Mammary epithelial cell (primary cell): ENCODE measurements at regions of chr15 and their contacts with region 1.

Region 1: GRCh38 chr15:99282121-99282520 is 30.8 kb downstream of the LRRC28 start:
- DNase-seq: no peak
- H3K4me3 ChIP-seq: no peak overlapping the region
- H3K27ac ChIP-seq: no peak overlapping the region
- H3K4me1 ChIP-seq: peaks cover 8% of the 10 kb centered on the region
- H3K27me3 ChIP-seq: no peaks in the 10 kb centered on the region
- CTCF ChIP-seq: no peak

Region 2: GRCh38 chr15:98904544-98904943 is 377.6 kb before region 1 on chr15:
- CTCF ChIA-PET with region 1: no interaction called
- dilution Hi-C with region 1: no loop called
- in situ Hi-C with region 1: no loop called
- intact Hi-C with region 1: no loop called
- DNase-seq: peak; percentile 52
- H3K4me3 ChIP-seq: no peak overlapping the region
- H3K27ac ChIP-seq: peak overlapping the region; percentile 94
- H3K4me1 ChIP-seq: peaks cover 69% of the 10 kb centered on the region
- H3K27me3 ChIP-seq: no peaks in the 10 kb centered on the region
- CTCF ChIP-seq: peak; percentile 67 to 84

Region 3: GRCh38 chr15:99324082-99324620 is 42.0 kb after region 1 on chr15:
- CTCF ChIA-PET with region 1: no interaction called
- dilution Hi-C with region 1: no loop called
- in situ Hi-C with region 1: no loop called
- intact Hi-C with region 1: loop called (anchors 5 kb)
- DNase-seq: peak; percentile 85
- H3K4me3 ChIP-seq: peak overlapping the region; percentile 33 to 59 (median 37)
- H3K27ac ChIP-seq: peak overlapping the region; percentile 99
- H3K4me1 ChIP-seq: peaks cover 67% of the 10 kb centered on the region
- H3K27me3 ChIP-seq: no peaks in the 10 kb centered on the region
- CTCF ChIP-seq: no peak

Region 4: DNA sequence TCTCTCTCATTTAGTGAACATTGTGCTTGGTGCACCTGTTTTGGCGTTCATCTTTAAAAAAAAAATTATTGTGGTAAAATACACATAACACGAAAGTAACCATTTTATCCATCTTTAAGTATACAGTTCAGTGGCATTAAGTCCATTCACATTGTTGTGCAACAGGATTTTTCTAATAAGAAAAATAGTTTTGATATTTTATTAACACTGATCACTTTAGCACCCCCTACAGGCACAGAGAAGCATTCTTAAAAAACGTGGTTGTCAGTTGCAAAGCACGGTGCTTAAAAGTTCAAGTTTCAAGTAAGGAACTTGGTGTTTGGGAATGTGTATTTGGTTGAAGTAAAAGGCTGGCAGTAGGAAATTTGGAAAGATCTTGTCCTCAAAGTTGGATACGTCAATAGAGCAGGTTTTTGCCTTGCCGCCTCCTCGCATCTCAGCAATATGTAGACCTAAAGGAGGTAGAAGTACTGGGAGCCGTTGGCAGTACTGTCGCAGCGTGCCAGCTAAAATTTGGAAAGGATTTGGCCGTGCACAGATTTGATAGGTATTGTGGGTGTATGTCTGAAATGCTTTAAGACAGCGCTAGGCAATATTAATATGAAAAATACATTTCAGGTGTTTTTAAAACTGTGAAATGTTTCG is 79.5 kb after region 1 on chr15:
- CTCF ChIA-PET with region 1: no interaction called
- dilution Hi-C with region 1: no loop called
- in situ Hi-C with region 1: loop called in 1 of 2 experiments (anchors 10 kb)
- intact Hi-C with region 1: loop called (anchors 1 kb)
- DNase-seq: peak; percentile 14
- H3K4me3 ChIP-seq: no peak overlapping the region
- H3K27ac ChIP-seq: no peak overlapping the region
- H3K4me1 ChIP-seq: no peaks in the 10 kb centered on the region
- H3K27me3 ChIP-seq: no peaks in the 10 kb centered on the region
- CTCF ChIP-seq: peak; percentile 59 to 66

Region 5: DNA sequence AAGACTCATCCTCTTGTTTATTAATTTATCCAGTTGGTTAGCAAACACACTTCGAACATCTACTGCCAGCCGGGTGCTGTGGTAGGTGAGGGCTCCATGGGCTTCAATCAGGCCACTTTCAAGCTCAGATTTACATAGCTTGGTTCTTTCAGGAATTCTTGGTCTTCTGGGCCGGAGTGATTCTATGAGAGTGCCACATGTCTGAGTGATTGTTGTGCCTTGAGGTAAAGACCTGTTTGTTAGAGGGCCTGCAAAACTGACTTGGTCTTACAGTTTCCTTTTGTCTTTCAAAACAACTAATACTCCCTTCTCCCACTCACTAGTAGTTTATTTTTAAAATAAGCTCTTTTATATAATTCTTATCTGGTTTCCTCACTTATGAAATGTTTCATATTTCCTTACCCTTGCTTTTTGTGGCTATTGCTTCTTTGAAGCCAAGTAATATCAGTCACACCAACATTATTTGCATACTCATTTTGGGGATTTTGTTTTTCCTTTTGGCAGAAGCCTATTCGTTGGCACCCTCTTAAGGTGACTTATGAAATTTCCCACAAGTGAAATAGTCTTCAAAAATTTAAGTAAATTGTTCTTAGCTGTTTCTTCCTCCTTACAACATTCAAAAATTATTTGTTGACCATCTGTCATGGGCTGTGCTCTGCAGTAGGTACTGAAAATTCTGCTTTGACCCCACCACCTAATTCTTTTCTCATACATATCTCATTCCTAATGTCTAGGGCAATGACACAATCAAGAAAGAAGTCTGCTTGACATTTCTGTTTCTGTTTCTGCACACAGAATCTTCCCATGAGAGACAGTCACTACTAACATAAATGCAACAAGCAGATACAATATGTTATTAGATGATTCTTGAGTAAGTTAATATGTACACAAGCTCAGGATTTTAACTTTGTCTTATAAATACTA is 89.3 kb after region 1 on chr15:
- CTCF ChIA-PET with region 1: no interaction called
- dilution Hi-C with region 1: no loop called
- in situ Hi-C with region 1: loop called in 1 of 2 experiments (anchors 10 kb)
- intact Hi-C with region 1: loop called (anchors 1 kb)
- DNase-seq: peak; percentile 6
- H3K4me3 ChIP-seq: no peak overlapping the region
- H3K27ac ChIP-seq: no peak overlapping the region
- H3K4me1 ChIP-seq: no peaks in the 10 kb centered on the region
- H3K27me3 ChIP-seq: no peaks in the 10 kb centered on the region
- CTCF ChIP-seq: peak in 1 of 2 donors; percentile 34

Region 6: DNA sequence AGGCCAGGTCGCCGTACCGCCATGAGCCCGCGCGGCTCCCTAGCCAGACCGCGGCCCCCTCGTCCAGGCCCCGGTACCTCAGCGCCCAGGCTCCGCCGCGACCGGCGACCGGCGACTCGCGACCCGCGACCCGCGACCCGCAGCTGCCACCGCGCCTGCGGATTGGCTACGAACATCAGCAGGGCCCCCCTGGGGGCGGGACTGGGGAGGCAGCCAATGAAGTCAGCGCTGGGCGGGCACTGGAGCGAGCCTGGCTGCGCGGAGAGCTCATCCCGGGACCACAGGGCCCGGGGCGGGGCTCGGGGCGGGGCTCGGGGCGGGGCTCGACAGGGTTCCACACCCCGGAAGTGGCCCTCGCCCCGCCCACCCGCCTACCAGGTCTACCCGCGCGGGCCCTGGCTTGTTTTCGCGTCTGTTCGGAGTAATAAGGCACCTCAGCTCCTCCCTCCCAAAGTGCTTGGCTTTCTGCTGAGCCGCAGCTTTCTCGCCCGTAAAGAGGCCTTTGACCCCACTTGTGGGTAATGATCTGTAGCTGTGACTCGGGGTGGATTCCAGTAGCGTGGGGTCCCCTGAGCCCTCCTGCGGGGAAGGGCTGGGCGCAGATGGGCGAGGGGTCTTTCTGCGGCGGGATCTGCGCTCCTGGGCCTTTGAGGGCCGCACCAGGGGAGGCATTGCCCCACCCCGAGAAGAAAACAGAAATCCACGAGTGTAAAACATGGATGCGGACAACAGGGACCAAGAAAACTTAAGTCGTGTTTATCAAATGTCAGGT is 451.3 kb after region 1 on chr15 and contains the start of gene LYSMD4:
- CTCF ChIA-PET with region 1: no interaction called
- dilution Hi-C with region 1: no loop called
- in situ Hi-C with region 1: loop called in 1 of 2 experiments (anchors 10 kb)
- intact Hi-C with region 1: loop called (anchors 1 kb)
- DNase-seq: peak; percentile 91
- H3K4me3 ChIP-seq: peak within 1 kb of the TSS; percentile 64 to 82 (median 70)
- H3K27ac ChIP-seq: peak within 1 kb of the TSS; percentile 47
- H3K4me1 ChIP-seq: peaks cover 28% of the 10 kb centered on the region
- H3K27me3 ChIP-seq: no peaks in the 10 kb centered on the region
- CTCF ChIP-seq: no peak
- total RNA-seq, gene LYSMD4: 10.9 to 20.5 TPM

Region 7: DNA sequence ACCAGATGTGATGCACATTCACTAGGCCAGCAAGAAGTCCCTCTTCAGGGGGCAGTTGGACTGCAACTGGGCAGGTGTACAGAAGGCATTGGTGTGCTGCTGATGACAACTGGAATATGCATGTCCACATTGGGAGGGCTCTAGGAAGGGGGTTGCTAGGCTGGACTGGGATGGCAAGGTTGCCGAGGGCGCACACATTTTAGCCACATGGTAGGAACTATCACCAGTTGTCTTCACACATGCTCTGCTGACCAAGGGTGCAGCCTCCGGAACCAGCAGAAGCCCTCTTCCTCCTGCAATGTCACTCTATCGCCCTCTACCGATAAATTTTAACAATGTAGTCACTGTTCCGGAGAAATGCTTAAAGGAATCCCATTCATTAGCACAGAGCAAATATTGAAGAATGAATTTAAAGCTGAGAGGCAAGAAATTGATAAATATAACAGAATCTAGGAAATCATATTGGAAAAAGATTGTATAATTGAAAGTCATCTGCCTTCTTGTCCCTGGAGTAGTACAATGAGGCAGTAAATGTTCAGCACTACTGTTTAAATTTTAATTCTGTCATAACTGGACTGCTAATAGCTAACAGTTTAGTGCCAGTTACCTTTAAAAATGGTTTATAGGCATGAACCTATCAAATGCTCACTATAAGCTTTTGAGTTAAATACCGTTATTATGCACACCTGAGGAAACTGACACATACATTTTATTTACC is 473.7 kb after region 1 on chr15:
- CTCF ChIA-PET with region 1: interaction called, 5 read pairs
- dilution Hi-C with region 1: no loop called
- in situ Hi-C with region 1: no loop called
- intact Hi-C with region 1: loop called (anchors 1 kb)
- DNase-seq: peak; percentile 52
- H3K4me3 ChIP-seq: no peak overlapping the region
- H3K27ac ChIP-seq: no peak overlapping the region
- H3K4me1 ChIP-seq: no peaks in the 10 kb centered on the region
- H3K27me3 ChIP-seq: no peaks in the 10 kb centered on the region
- CTCF ChIP-seq: peak; percentile 74 to 87